Activated B cell treated with CpG ODN at 0.5 μM for 24 hours (primary cell): ENCODE measurements at regions of chr1 and their contacts with region 1.

Region 1: DNA sequence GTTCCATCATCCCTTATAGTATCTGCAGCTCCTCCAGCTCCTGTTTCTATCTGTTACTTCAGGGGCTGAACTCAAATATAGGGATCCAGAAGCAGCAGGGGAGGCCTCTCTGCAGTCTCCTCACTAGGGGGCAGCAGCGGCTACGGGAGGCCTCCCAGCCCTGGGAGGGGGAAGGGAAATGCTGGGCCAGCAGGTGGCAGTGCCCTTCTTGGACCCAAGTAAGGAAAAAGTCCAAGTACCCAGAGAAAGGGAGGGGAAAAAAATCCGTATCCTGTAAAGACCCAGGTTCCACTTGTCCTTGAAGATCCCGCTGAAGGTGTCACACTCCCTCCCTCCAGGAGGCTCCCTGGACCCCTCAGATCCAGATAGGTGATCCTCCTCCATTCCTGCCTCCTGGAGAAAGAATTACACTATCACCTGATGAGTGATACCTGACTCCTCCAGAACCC is 14.1 kb upstream of the NUAK2 start:
- DNase-seq: peak; percentile 70
- ATAC-seq: peak; percentile 84
- H3K4me3 Mint-ChIP-seq: no peak overlapping the region
- H3K27ac Mint-ChIP-seq: no peak overlapping the region
- H3K4me1 Mint-ChIP-seq: peaks cover 6% of the 10 kb centered on the region
- H3K27me3 Mint-ChIP-seq: no peaks in the 10 kb centered on the region
- CTCF ChIP-seq: peak; percentile 84

Region 2: DNA sequence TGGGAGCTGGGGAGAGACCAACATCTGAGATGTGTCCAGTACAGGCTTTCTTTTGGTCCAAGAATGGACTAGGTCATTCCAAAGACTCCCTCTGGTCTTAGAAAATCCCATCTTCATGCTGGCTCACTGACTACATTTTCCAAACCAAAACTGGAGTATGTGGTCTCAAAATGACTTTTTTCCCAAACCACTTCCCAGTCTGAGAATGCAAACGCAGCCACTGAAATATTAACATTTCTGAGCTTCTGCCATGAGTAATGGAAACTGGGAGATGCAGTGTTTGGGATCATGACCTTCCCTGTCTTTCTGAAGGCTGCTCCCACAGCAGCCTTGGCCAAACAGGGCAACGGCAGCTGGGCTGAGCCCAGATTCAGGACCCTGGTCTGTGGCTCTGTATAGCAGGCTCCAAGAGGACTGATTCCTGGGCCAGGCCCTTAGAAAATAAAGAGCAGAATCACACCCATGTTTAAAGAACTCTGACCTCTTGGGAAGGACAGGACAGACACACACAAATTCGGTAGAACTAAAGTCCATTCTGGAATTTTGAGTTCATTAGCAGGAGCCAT is 354.7 kb before region 1 on chr1:
- CTCF ChIA-PET with region 1: no interaction called
- POLR2A ChIA-PET with region 1: no interaction called
- intact Hi-C with region 1: no loop called
- DNase-seq: no peak
- ATAC-seq: no peak
- H3K4me3 Mint-ChIP-seq: no peak overlapping the region
- H3K27ac Mint-ChIP-seq: no peak overlapping the region
- H3K4me1 Mint-ChIP-seq: peaks cover 19% of the 10 kb centered on the region
- H3K27me3 Mint-ChIP-seq: peaks cover 11% of the 10 kb centered on the region
- CTCF ChIP-seq: no peak

Region 3: DNA sequence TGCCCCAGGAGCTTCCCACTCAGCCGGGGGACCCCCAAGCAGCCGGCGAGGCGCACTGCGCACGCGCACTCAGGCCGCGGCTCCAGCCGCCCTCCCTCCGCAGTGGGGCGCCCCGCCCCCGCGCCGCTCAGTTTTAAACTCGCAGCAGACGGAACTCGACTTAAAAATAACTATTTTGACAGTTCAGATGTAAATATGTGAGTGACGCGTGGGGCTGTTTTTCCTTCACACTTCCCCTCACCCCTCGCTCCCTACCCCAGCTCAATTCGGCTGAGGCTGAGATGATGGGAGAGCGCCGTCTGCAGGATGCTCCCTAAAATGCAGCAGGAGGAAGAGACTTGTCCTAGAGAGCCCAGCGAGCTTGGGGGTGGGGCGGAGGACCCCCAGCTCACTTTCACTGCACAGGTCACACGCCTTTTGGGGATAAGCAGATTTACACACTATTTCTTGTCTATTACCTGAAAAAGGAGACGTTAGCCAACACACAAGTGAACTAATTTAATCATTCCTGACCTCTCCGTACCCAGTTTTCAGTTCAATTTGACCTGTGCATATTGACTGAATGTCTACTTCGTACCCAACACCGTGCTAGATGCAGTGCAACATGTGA is 95.1 kb after region 1 on chr1:
- CTCF ChIA-PET with region 1: interaction called, 3 read pairs
- POLR2A ChIA-PET with region 1: interaction called, 4 read pairs
- intact Hi-C with region 1: loop called (anchors 2 kb)
- DNase-seq: peak; percentile 67
- ATAC-seq: peak; percentile 85
- H3K4me3 Mint-ChIP-seq: peak overlapping the region; percentile 84
- H3K27ac Mint-ChIP-seq: peak overlapping the region; percentile 55
- H3K4me1 Mint-ChIP-seq: peaks cover 39% of the 10 kb centered on the region
- H3K27me3 Mint-ChIP-seq: no peaks in the 10 kb centered on the region
- CTCF ChIP-seq: no peak